ENCODE measurements at regions of chr16 and their contacts with region 1.

Region 1: GRCh38 chr16:26598061-26598460 is 468.7 kb upstream of the C16orf82 start:
- DNase-seq: peak in 7 of 9 donors; percentile 7 to 72 (median 24)
- ATAC-seq: peak; percentile 86
- H3K4me3 ChIP-seq: no peak overlapping the region
- H3K4me3 Mint-ChIP-seq: peak overlapping the region in 1 of 10 donors; percentile 74
- H3K27ac ChIP-seq: no peak overlapping the region
- H3K27ac Mint-ChIP-seq: peak overlapping the region in 3 of 9 donors; percentile 15 to 96 (median 69)
- H3K4me1 ChIP-seq: peaks cover 0 to 20% of the 10 kb centered on the region in 2 donors
- H3K4me1 Mint-ChIP-seq: peaks cover 4 to 75% (median 9%) of the 10 kb centered on the region in 7 donors
- H3K27me3 ChIP-seq: no peaks in the 10 kb centered on the region
- H3K27me3 Mint-ChIP-seq: peaks cover 0 to 19% (median 0%) of the 10 kb centered on the region in 5 donors

Region 2: GRCh38 chr16:25896412-25896811 is 701.6 kb before region 1 on chr16:
- CTCF ChIA-PET with region 1: no interaction called
- POLR2A ChIA-PET with region 1: no interaction called
- intact Hi-C with region 1: no loop called
- DNase-seq: no peak
- ATAC-seq: no peak
- H3K4me3 ChIP-seq: no peak overlapping the region
- H3K4me3 Mint-ChIP-seq: no peak overlapping the region
- H3K27ac ChIP-seq: no peak overlapping the region
- H3K27ac Mint-ChIP-seq: no peak overlapping the region
- H3K4me1 ChIP-seq: no peaks in the 10 kb centered on the region
- H3K4me1 Mint-ChIP-seq: no peaks in the 10 kb centered on the region
- H3K27me3 ChIP-seq: no peaks in the 10 kb centered on the region
- H3K27me3 Mint-ChIP-seq: peaks cover 0 to 46% (median 36%) of the 10 kb centered on the region in 5 donors

Region 3: GRCh38 chr16:26567356-26567755 is 30.7 kb before region 1 on chr16:
- CTCF ChIA-PET with region 1: no interaction called
- POLR2A ChIA-PET with region 1: no interaction called
- intact Hi-C with region 1: no loop called
- DNase-seq: no peak
- ATAC-seq: no peak
- H3K4me3 ChIP-seq: no peak overlapping the region
- H3K4me3 Mint-ChIP-seq: no peak overlapping the region
- H3K27ac ChIP-seq: no peak overlapping the region
- H3K27ac Mint-ChIP-seq: no peak overlapping the region
- H3K4me1 ChIP-seq: no peaks in the 10 kb centered on the region
- H3K4me1 Mint-ChIP-seq: peaks cover 0 to 11% (median 0%) of the 10 kb centered on the region in 7 donors
- H3K27me3 ChIP-seq: no peaks in the 10 kb centered on the region
- H3K27me3 Mint-ChIP-seq: peaks cover 7 to 31% (median 11%) of the 10 kb centered on the region in 5 donors

Region 4: DNA sequence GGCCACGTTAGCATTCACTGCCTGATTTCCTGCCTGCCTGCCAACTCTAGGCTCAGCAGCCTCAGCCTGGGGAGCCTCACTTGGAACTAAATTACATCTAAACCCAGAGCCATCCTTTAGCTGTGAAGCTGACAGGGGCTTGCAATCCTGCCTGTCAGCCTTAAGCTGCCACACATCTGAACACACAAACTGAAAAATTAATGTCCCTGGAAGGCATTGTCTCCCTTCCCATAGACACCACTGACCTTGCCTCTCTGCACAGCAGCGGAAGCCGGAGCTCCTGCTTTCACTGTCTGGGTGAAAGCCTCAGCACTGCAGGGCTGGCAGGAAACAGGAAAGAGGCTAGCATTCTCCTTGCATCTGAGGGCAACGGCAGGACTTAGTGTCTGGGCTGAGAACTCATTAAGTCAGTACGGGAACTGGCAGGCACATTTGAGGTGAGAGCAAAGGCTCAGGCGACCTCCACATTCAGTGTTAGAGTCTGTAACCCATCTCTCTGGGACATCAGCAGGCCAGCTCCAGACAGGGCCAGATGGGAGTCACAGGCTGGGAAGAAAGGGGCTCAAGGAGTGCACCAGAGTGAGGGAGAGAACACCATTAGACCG is 16.3 kb after region 1 on chr16:
- CTCF ChIA-PET with region 1: interaction called, 3 read pairs
- POLR2A ChIA-PET with region 1: no interaction called
- intact Hi-C with region 1: loop called in 1 of 2 experiments (anchors 2 kb)
- DNase-seq: peak in 1 of 9 donors; percentile 11
- ATAC-seq: no peak
- H3K4me3 ChIP-seq: no peak overlapping the region
- H3K4me3 Mint-ChIP-seq: peak overlapping the region in 2 of 10 donors; percentile 24 to 94
- H3K27ac ChIP-seq: no peak overlapping the region
- H3K27ac Mint-ChIP-seq: peak overlapping the region in 4 of 9 donors; percentile 1 to 98 (median 40)
- H3K4me1 ChIP-seq: no peaks in the 10 kb centered on the region
- H3K4me1 Mint-ChIP-seq: peaks cover 0 to 51% (median 0%) of the 10 kb centered on the region in 7 donors
- H3K27me3 ChIP-seq: no peaks in the 10 kb centered on the region
- H3K27me3 Mint-ChIP-seq: peaks cover 0 to 23% (median 4%) of the 10 kb centered on the region in 5 donors

Region 5: GRCh38 chr16:26645614-26646013 is 47.6 kb after region 1 on chr16:
- CTCF ChIA-PET with region 1: no interaction called
- POLR2A ChIA-PET with region 1: no interaction called
- intact Hi-C with region 1: loop called in 1 of 2 experiments (anchors 1 kb)
- DNase-seq: peak in 2 of 9 donors; percentile 1 to 69
- ATAC-seq: no peak
- H3K4me3 ChIP-seq: no peak overlapping the region
- H3K4me3 Mint-ChIP-seq: peak overlapping the region in 1 of 10 donors; percentile 32
- H3K27ac ChIP-seq: no peak overlapping the region
- H3K27ac Mint-ChIP-seq: peak overlapping the region in 1 of 9 donors; percentile 51
- H3K4me1 ChIP-seq: no peaks in the 10 kb centered on the region
- H3K4me1 Mint-ChIP-seq: peaks cover 0 to 64% (median 2%) of the 10 kb centered on the region in 7 donors
- H3K27me3 ChIP-seq: no peaks in the 10 kb centered on the region
- H3K27me3 Mint-ChIP-seq: peaks cover 0 to 22% (median 9%) of the 10 kb centered on the region in 5 donors